ENCODE measurements at regions of chr3 and their contacts with region 1.

Region 1: GRCh38 chr3:66179793-66180192 is 41.0 kb upstream of the SLC25A26 start:
- DNase-seq: no peak
- H3K4me3 ChIP-seq: no peak overlapping the region
- CTCF ChIP-seq: no peak

Region 2: GRCh38 chr3:66195347-66195783 is 15.6 kb after region 1 on chr3:
- CTCF ChIA-PET with region 1: interaction called, 20 read pairs
- POLR2A ChIA-PET with region 1: no interaction called
- DNase-seq: no peak
- H3K4me3 ChIP-seq: peak overlapping the region; percentile 35
- CTCF ChIP-seq: peak; percentile 29

Measured in AG04449 (cell line).